Breast epithelium (tissue), 4 donors: ENCODE measurements at regions of chr12 and their contacts with region 1.

Region 1: DNA sequence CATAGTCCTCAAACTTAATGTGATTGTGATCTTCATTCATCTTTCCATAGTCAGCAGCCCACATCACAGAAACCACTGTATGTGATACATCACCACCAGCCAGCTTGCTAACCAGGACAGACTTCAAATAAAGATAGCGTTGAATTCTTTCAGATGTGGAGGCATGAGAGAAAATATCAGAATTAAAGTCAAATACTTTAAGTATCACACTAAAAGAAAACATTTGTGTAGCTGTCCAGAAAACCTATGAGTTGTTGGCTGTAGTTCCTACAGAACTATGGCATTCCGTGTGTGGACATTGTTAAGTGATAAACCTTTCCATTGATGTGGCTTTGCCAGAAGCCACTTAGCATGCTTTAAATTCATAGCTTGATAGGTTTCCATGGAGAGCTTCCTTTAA is 105.1 kb downstream of the LLPH start:
- DNase-seq: no peak
- H3K4me3 ChIP-seq: no peak overlapping the region
- H3K27ac ChIP-seq: no peak overlapping the region
- H3K4me1 ChIP-seq: no peaks in the 10 kb centered on the region
- H3K27me3 ChIP-seq: no peaks in the 10 kb centered on the region
- CTCF ChIP-seq: no peak
- POLR2A ChIP-seq: no peak

Region 2: DNA sequence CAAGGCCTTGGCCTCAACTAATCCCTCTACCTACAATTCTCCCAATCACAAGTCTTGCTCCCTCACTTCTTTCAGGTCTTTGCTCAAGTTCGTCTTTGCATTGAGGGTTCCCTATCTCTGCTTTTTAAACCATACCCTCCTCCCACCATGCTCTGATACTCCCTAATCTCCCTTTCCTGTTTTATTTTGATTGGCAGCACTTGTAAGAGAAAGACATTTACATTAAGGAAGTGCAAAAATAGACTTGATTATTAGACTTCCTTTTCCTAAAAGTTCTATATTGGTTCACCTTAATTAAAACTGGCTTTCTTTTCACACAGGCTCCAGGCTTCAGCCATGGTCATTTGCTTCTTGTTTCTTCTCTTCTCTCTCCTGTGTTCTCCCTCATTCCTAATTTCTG is 886.1 kb before region 1 on chr12:
- intact Hi-C with region 1: loop called (anchors 10 kb)
- DNase-seq: no peak
- H3K4me3 ChIP-seq: no peak overlapping the region
- H3K27ac ChIP-seq: no peak overlapping the region
- H3K4me1 ChIP-seq: no peaks in the 10 kb centered on the region
- H3K27me3 ChIP-seq: no peaks in the 10 kb centered on the region
- CTCF ChIP-seq: no peak
- POLR2A ChIP-seq: no peak

Region 3: DNA sequence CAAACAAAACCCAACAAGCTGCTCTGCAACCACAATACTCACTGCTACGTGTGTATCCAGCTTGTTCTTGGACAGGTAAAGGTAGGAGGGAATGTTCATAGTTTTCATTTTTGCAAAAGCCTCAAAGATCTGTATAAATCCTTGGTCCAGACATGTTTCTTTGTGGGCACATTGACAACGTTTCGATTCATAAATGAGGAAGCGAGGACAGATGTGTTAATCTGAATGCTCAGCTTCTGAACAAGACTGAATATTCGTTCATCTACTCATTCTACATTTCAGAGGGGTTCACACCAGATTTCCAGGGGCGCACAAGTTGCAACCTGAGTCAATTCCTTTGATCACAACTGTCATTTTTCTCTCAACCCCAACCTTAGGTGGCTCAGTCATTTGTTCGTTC is 29.3 kb before region 1 on chr12:
- intact Hi-C with region 1: no loop called
- DNase-seq: no peak
- H3K4me3 ChIP-seq: no peak overlapping the region
- H3K27ac ChIP-seq: no peak overlapping the region
- H3K4me1 ChIP-seq: no peaks in the 10 kb centered on the region
- H3K27me3 ChIP-seq: no peaks in the 10 kb centered on the region
- CTCF ChIP-seq: no peak
- POLR2A ChIP-seq: no peak

Region 4: DNA sequence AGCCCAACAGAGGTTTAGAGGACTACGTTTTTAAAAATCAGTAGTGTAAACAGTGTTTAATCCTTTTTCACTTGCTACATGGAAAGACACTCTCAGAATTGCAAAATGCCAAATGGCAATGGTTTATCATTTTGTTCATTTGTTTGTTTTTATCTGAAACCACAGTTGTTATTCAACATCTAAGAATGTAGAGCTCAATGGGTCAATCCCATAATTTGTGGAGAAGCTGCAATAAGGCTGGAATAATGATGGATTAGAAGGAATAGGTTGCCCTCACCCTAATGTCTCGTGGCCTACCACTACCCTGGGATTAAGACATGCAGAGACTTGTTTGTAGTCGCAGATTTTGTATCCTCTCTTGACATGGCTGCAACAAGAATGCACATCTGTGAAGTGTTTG is 10.7 kb before region 1 on chr12:
- intact Hi-C with region 1: no loop called
- DNase-seq: no peak
- H3K4me3 ChIP-seq: no peak overlapping the region
- H3K27ac ChIP-seq: no peak overlapping the region
- H3K4me1 ChIP-seq: no peaks in the 10 kb centered on the region
- H3K27me3 ChIP-seq: no peaks in the 10 kb centered on the region
- CTCF ChIP-seq: no peak
- POLR2A ChIP-seq: no peak

Region 5: DNA sequence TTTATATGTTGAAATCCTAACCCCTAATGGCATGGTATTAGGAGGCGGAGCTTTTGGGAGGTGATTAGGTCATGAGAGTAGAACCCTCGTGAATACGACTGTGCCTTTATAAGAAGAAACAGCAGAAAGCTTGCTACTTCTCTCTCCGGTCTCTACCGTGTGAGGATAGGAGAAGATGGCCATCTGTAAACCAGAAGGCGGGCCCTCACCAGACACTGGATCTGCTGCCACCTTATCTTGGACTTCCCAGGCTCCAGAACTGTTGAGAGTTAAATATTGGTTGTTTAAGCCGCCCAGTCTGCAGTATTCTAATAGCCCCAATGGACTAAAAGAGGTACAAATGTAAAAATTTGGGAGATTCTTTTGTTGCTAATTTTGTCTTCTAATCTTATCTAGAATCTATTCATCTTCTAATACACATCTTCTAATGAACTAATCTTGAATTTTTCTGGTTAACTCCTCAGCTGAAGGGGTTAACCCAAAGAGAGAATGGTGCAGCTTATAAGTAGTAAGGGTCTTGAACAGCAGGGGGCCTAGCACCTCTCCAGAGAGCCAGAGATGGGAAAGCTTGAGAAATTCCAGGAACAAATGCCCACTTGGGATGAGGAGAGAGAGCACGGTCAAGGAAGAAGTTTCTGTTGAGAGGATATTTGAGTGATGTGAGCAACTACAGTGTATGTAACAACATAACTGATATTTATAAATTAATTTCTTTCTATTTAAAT is 917.4 kb after region 1 on chr12:
- intact Hi-C with region 1: no loop called
- DNase-seq: no peak
- H3K4me3 ChIP-seq: no peak overlapping the region
- H3K27ac ChIP-seq: no peak overlapping the region
- H3K4me1 ChIP-seq: no peaks in the 10 kb centered on the region
- H3K27me3 ChIP-seq: no peaks in the 10 kb centered on the region
- CTCF ChIP-seq: no peak
- POLR2A ChIP-seq: no peak